Endothelial cell of umbilical vein (primary cell): ENCODE measurements at regions of chr2 and their contacts with region 1.

Region 1: DNA sequence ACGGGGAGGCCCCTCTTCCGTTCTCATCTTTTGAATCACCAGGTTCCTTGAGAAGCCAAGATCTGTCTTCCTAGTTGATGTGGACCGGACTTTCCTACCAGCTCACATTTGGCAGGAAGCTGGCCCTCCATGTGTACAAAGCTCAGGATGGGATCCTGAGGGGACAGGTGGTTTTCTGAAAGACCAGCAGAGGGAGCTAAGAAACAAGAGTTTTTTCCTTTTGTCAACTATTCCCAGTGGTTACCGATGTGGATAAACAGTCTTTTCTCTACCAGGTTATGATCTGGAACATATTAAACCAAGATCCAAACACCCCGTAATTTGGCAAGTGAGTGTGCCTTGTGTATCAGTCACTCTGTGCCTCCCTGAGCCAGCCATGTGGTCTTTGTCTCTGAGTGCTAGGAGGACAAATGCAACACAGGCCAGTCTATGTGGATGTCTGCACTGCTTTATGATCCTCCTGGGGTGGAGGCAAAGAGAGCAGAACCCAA is 25.1 kb upstream of the ARHGAP25 start:
- DNase-seq: peak; percentile 52
- H3K4me3 ChIP-seq: no peak overlapping the region
- H3K27ac ChIP-seq: no peak overlapping the region
- H3K4me1 ChIP-seq: no peaks in the 10 kb centered on the region
- H3K27me3 ChIP-seq: peaks cover 18 to 45% of the 10 kb centered on the region in 2 experiments
- CTCF ChIP-seq: peak; percentile 72 to 74
- POLR2A ChIP-seq: no peak

Region 2: DNA sequence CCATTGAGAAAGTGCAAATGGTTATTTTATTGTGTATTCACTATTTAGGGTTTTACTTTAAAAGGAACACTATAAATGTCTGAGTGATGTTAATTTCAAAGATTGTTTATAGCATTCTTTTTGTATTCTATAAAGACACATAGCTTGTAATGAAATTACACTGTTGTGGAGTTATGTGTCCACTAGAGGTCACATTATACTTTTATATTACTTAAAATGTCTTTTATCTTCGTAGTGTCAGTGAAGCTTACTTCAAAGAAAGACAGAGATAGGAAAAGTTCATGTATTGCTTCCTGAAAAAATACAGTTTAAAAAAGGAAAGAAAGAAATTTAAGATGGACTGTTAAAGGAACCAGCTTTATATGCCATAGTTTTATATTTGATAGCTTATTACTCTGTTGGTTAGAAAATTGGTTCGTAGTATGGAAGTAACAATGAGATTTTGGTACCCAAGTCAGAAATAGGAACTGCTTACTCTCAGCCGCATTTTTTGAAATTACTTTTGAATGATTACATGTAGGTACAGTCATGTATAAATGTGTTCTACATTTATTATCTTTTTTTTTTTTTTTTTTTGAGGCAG is 221.6 kb before region 1 on chr2:
- CTCF ChIA-PET with region 1: interaction called, 70 read pairs
- POLR2A ChIA-PET with region 1: no interaction called
- dilution Hi-C with region 1: loop called (anchors 25 kb)
- intact Hi-C with region 1: no loop called
- DNase-seq: peak; percentile 44
- H3K4me3 ChIP-seq: no peak overlapping the region
- H3K27ac ChIP-seq: no peak overlapping the region
- H3K4me1 ChIP-seq: peaks cover 2% of the 10 kb centered on the region
- H3K27me3 ChIP-seq: no peaks in the 10 kb centered on the region
- CTCF ChIP-seq: peak; percentile 11 to 21
- POLR2A ChIP-seq: no peak

Region 3: GRCh38 chr2:68689553-68690537 is 19.6 kb before region 1 on chr2:
- CTCF ChIA-PET with region 1: interaction called, 12 read pairs
- POLR2A ChIA-PET with region 1: no interaction called
- dilution Hi-C with region 1: no loop called
- intact Hi-C with region 1: no loop called
- DNase-seq: no peak
- H3K4me3 ChIP-seq: no peak overlapping the region
- H3K27ac ChIP-seq: no peak overlapping the region
- H3K4me1 ChIP-seq: no peaks in the 10 kb centered on the region
- H3K27me3 ChIP-seq: peaks cover 2 to 5% of the 10 kb centered on the region in 2 experiments
- CTCF ChIP-seq: no peak
- POLR2A ChIP-seq: no peak

Region 4: GRCh38 chr2:68742626-68743415 is 33.4 kb after region 1 on chr2:
- CTCF ChIA-PET with region 1: interaction called, 19 read pairs
- POLR2A ChIA-PET with region 1: no interaction called
- dilution Hi-C with region 1: no loop called
- intact Hi-C with region 1: no loop called
- DNase-seq: no peak
- H3K4me3 ChIP-seq: no peak overlapping the region
- H3K27ac ChIP-seq: no peak overlapping the region
- H3K4me1 ChIP-seq: peaks cover 6% of the 10 kb centered on the region
- H3K27me3 ChIP-seq: peaks cover 2 to 3% of the 10 kb centered on the region in 2 experiments
- CTCF ChIP-seq: no peak
- POLR2A ChIP-seq: no peak

Region 5: GRCh38 chr2:68909793-68910674 is 200.6 kb after region 1 on chr2:
- CTCF ChIA-PET with region 1: interaction called, 62 read pairs
- POLR2A ChIA-PET with region 1: no interaction called
- dilution Hi-C with region 1: no loop called
- intact Hi-C with region 1: loop called (anchors 1 kb)
- DNase-seq: peak; percentile 82
- H3K4me3 ChIP-seq: no peak overlapping the region
- H3K27ac ChIP-seq: no peak overlapping the region
- H3K4me1 ChIP-seq: peaks cover 32% of the 10 kb centered on the region
- H3K27me3 ChIP-seq: peaks cover 4 to 12% of the 10 kb centered on the region in 2 experiments
- CTCF ChIP-seq: peak; percentile 77 to 86
- POLR2A ChIP-seq: no peak

Region 6: DNA sequence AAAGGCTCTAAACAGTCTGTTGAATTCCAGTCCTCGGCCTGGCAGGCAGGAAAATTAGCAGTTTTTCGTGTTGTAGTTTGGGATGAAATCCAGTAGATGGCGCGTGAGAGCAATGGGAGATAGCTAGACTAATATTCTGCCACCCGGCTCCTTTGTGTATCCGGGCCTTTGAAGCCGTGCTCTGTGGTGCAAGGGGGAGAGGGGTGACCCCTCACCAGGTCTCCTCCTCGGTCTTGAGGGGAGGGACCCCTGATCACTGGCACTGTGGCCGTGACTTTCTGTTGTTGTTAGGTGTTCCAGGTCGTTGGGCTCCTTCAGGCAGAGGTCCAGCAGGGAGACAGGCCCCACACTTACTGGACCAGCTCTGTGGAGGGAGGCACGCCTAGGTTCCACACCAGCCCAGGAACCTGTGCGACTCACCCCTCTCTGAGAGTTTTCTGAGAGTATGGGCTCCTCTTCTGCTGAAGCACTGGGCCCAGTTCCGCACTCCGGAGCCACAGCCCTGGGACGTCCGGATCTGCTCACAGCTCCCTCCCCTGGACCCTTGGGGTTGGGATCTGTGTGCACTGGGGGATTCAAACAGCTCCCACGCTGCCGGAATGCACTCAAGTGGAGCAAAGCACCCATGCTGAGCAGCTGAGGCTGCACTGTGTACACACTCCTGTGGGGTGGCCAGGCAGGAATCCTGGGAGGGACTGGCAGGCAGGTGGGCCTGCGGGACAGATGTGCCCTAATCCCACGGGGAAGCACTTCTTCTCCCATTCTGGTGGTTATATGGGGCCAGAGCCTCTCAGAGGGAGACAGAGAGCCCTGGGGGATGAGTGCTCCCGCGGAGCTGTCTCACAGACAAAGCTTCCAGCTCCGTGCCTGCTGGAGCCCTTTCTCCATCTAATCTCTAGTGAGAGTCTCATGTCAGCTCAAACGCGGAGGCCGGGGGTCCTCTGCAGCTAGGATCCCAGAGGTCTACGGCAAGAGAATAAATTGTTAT is 234.4 kb after region 1 on chr2:
- CTCF ChIA-PET with region 1: interaction called, 12 read pairs
- POLR2A ChIA-PET with region 1: no interaction called
- dilution Hi-C with region 1: no loop called
- intact Hi-C with region 1: no loop called
- DNase-seq: peak; percentile 64
- H3K4me3 ChIP-seq: no peak overlapping the region
- H3K27ac ChIP-seq: no peak overlapping the region
- H3K4me1 ChIP-seq: no peaks in the 10 kb centered on the region
- H3K27me3 ChIP-seq: peaks cover 6 to 29% of the 10 kb centered on the region in 2 experiments
- CTCF ChIP-seq: peak; percentile 70 to 71
- POLR2A ChIP-seq: no peak